ENCODE measurements at regions of chr7 and their contacts with region 1.

Region 1: GRCh38 chr7:67006971-67007370 is 10.3 kb downstream of the TYW1 start:
- DNase-seq: no peak
- ATAC-seq: no peak

Region 2: DNA sequence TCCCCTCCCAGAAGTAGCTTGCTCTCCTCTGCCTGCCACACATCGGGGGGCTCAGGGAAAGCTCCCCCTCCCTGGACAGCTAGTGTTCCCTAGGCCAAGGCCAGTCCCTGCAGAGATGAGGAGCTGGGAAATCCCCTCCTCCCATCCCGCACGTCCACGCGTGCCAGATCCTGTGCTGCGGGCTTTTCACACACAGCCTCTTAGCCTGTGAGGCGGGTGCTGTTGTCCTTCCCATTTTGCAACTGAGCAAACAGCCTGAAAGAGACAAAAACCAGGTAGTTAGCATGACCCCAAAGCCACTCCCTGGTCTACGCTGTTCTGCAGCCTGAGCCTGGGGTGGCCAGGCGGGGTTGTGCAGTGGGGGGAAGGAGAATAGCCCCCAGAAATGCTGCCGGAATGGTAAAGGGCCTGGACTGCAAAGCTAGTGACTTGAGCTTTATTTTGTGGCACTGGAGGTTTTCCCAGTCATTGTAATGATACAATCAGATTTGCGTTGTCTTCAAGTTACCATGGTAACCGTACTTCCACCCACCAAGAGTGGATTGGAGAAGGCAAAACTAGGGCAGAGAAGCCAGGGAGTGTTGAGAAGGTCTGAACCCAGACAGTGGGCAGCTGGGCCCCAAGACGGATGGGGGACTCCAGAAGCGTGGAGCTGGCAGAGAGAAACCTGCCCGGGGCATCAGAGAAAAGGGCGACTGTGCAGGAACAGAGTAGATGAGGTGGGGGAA is 476.9 kb before region 1 on chr7:
- intact Hi-C with region 1: loop called (anchors 10 kb)
- DNase-seq: no peak
- ATAC-seq: no peak

Region 3: GRCh38 chr7:66939325-66939724 is 67.6 kb before region 1 on chr7:
- intact Hi-C with region 1: no loop called
- DNase-seq: no peak
- ATAC-seq: no peak

Region 4: GRCh38 chr7:67484244-67484751 is 477.3 kb after region 1 on chr7:
- intact Hi-C with region 1: no loop called
- DNase-seq: peak; percentile 76
- ATAC-seq: peak; percentile 63

Measured in sciatic nerve (tissue), 2 donors.